ENCODE measurements at regions of chr15 and their contacts with region 1.

Region 1: DNA sequence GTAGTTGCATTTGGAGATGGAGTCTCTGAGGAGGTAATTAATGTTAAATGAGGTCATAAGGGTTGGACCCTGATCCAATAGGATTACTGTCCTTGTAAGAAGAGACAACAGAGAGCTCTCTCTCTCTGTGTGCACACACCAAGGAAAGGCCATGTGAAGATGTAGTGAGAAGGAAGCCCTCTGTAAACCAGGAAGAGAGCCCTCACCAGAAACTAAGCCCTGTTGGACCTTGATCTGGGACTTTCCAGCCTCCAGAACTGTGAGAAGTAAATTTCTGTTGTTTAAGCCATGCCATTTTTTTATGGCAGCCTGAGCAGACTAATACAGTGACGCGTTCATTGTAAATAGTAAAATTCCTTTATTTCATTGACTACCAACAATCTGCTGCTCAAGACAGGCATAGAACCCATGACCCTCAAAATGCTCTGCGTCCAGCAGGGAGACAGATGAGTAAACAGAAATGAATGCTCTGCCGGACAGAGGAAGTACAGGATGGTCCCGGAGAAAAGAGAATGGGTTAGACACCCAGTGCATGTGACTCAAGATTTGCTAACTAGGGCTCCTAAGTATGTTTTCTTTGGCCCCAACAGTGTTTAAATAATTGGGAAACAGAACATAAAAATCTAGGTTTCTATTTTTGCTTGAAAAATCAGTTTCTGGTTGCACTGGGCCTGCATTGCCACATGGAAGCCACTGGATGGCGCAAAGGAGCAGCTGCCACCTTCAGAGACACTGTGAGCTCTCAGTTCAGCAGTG is 37.9 kb upstream of the TNFAIP8L3 start:
- DNase-seq: peak; percentile 49
- H3K4me3 ChIP-seq: no peak overlapping the region
- H3K27ac ChIP-seq: peak overlapping the region; percentile 31 to 54 (median 46)
- H3K4me1 ChIP-seq: peaks cover 0 to 38% (median 19%) of the 10 kb centered on the region in 4 donors
- H3K27me3 ChIP-seq: no peaks in the 10 kb centered on the region
- CTCF ChIP-seq: peak; percentile 63 to 74 (median 64)
- EP300 ChIP-seq: no peak
- POLR2A ChIP-seq: no peak

Region 2: GRCh38 chr15:50940506-50940905 is 192.1 kb before region 1 on chr15:
- in situ Hi-C with region 1: no loop called
- intact Hi-C with region 1: no loop called
- DNase-seq: no peak
- H3K4me3 ChIP-seq: no peak overlapping the region
- H3K27ac ChIP-seq: no peak overlapping the region
- H3K4me1 ChIP-seq: peaks cover 0 to 4% (median 0%) of the 10 kb centered on the region in 4 donors
- H3K27me3 ChIP-seq: no peaks in the 10 kb centered on the region
- CTCF ChIP-seq: no peak
- EP300 ChIP-seq: no peak
- POLR2A ChIP-seq: no peak

Region 3: DNA sequence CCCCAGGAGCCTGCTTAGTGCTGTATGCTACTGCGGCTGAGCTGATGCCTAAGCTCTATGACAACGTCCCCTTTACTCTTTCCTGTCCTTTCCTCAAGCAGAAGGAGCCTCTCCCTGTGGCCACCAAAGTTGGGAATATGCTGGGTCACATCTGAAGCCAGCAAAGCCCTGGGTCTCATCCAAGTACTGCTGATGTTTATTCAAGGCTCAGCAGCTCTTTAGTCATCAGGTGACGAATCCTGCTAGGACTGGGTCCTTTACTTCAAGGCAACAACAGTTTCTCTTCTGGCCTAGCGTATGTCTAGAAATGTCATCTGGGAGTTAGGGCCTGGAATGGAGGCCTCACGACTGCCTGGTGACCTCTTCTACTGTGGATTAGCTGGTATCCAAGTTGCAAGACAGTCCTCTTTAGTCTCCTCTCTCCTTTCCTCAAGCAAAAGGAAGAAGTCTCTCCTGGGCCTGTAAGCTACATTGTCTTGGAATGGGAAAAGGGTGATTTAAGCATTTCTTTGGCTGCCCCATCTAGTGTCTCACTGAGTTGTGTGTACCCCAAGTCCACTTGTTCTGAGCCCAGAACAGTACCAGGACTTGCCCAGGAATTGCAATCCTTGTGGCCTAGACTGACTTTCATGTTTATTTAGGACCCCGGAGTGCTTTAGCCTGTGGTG is 101.8 kb before region 1 on chr15:
- in situ Hi-C with region 1: loop called in 1 of 4 experiments (anchors 25 kb)
- intact Hi-C with region 1: no loop called
- DNase-seq: no peak
- H3K4me3 ChIP-seq: no peak overlapping the region
- H3K27ac ChIP-seq: peak overlapping the region in 3 of 4 donors; percentile 19 to 46 (median 27)
- H3K4me1 ChIP-seq: no peaks in the 10 kb centered on the region
- H3K27me3 ChIP-seq: no peaks in the 10 kb centered on the region
- CTCF ChIP-seq: no peak
- EP300 ChIP-seq: no peak
- POLR2A ChIP-seq: no peak

Region 4: DNA sequence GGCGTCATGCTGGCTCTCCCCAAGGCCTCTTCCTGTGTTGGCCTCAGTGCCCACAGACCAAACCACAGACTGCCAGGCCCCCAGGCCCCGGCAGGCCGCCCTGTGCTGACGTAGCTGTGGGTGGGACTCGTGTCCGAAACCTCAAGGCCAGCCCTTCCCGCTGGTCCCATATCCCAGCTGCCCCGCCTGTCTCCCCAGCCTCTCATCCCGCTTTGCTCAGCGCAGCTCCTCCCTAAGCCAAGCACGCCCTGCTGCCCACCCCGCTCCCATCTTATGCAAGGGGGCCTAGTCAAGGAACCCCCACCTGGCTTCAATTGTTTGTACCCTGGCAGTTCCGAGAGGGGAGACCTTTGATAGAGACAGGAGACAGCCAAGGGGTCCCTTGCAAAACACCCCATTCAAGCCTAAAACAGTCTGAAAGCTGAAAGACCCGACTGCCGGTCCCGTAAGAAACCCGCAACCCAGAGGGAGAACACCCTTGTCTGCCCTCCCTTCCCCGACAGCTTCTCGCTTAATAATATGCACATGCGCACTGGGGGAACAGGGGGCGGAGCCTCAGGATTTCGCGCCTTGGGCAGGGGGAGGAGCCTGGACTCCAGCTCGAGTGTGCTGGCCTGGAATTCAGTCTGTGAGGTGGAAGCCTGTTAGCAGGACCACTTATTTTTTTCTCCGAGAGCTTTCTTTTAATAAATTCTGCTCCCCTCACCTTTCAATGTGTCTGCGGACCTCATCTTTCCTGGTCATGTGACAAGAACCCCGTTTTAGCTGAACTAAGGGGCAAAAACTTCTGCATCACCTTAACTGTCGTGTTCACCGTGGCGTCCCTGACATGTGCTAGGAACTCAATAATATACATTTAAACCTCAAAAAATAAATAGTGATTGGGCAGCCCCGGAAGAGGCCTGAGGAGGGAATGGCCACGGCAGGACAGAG is 55.1 kb before region 1 on chr15:
- in situ Hi-C with region 1: no loop called
- intact Hi-C with region 1: loop called (anchors 10 kb)
- DNase-seq: peak; percentile 71
- H3K4me3 ChIP-seq: peak overlapping the region in 2 of 4 donors; percentile 2 to 10
- H3K27ac ChIP-seq: peak overlapping the region; percentile 32 to 57 (median 46)
- H3K4me1 ChIP-seq: peaks cover 0 to 5% (median 2%) of the 10 kb centered on the region in 4 donors
- H3K27me3 ChIP-seq: no peaks in the 10 kb centered on the region
- CTCF ChIP-seq: no peak
- EP300 ChIP-seq: no peak
- POLR2A ChIP-seq: no peak

Measured in transverse colon (tissue), 4 donors.